ENCODE measurements at regions of chr9 and their contacts with region 1.

Region 1: DNA sequence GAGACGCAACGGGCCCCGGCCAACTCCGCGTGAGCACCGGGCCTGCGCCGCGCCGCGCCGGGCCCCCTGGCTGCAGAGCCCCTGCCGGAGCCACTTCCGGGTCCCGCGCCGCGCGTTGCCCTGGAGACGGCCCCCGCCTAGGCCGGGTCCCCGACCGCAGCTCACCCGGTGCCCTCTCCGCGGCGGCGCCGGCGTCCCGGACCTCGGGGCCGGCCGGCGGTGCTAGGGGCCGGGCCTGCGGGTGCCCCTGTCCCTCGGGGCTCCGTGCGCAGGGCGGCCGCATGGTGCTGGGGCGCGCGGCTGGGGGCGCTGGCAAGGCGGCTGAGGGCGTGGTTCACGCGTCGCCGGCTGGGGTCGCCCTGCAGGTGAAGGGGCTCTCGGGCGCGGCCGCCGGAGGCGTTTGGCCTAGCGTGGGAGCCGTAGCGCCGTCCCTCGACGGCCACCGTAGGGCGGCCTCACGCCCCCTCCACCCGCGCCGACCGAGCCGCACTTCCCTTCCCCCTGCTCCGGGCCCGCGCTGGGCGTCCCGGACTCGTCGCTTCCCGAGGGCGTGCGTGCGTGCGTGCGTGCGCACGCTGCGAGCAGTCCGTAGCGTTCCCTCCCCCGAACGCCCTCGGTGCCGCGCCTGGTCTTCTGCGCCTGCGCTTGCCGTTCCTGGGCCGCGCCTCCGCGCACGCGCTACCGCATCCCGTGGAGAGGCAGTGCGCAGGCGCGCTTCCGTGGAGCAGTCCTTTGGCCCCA is at the start of gene TMEM250:
- DNase-seq: peak; percentile 93 to 99 (median 96)
- ATAC-seq: peak; percentile 93
- H3K4me3 ChIP-seq: peak within 1 kb of the TSS; percentile 54
- H3K4me3 Mint-ChIP-seq: peak within 1 kb of the TSS; percentile 89
- H3K27ac ChIP-seq: peak within 1 kb of the TSS; percentile 76 to 79
- H3K27ac Mint-ChIP-seq: peak within 1 kb of the TSS; percentile 79
- H3K4me1 ChIP-seq: peaks cover 62% of the 10 kb centered on the region
- H3K4me1 Mint-ChIP-seq: peaks cover 22% of the 10 kb centered on the region
- H3K27me3 ChIP-seq: no peaks in the 10 kb centered on the region
- H3K27me3 Mint-ChIP-seq: no peaks in the 10 kb centered on the region
- CTCF ChIP-seq: no peak
- total RNA-seq, gene TMEM250: 6.5 to 7.9 TPM

Region 2: DNA sequence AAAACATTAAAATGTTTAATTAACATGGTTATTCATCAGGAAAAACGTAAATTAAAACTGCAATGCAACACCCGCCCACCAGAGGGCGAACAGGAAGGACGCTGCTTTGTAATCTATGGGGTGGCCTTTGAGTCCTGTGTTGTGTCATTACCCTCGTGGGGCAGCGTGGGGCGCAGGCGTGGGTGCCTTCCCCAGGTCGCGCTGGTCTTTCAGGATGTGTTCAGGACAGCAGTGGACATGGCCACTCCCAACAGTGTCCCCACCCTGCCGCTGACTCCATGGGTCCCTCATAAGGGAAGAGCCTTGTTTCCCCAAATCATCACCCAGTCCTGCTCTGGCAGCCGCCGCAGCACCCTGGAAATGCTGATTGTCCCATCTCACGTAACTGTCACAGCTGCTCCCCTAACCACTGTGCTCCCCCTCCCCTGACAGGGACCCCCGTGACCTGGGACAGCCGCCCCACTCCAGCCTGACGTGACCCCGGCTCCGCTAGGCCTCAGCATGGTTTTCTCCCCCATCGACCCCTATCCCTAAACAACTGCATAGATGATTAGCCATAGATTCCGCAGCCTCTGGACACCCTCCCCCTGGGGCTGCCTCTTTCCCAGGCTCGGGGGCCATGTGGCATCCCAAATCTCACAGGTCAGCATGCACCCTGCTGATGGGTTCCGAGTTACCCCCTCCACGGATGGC is 515.6 kb before region 1 on chr9:
- CTCF ChIA-PET with region 1: no interaction called
- POLR2A ChIA-PET with region 1: no interaction called
- intact Hi-C with region 1: loop called in 1 of 2 experiments (anchors 5 kb)
- DNase-seq: peak; percentile 22 to 70 (median 45)
- ATAC-seq: no peak
- H3K4me3 ChIP-seq: no peak overlapping the region
- H3K4me3 Mint-ChIP-seq: no peak overlapping the region
- H3K27ac ChIP-seq: no peak overlapping the region
- H3K27ac Mint-ChIP-seq: no peak overlapping the region
- H3K4me1 ChIP-seq: peaks cover 5% of the 10 kb centered on the region
- H3K4me1 Mint-ChIP-seq: no peaks in the 10 kb centered on the region
- H3K27me3 ChIP-seq: peaks cover 0 to 6% of the 10 kb centered on the region in 2 experiments
- H3K27me3 Mint-ChIP-seq: peaks cover 27% of the 10 kb centered on the region
- CTCF ChIP-seq: peak; percentile 77

Region 3: DNA sequence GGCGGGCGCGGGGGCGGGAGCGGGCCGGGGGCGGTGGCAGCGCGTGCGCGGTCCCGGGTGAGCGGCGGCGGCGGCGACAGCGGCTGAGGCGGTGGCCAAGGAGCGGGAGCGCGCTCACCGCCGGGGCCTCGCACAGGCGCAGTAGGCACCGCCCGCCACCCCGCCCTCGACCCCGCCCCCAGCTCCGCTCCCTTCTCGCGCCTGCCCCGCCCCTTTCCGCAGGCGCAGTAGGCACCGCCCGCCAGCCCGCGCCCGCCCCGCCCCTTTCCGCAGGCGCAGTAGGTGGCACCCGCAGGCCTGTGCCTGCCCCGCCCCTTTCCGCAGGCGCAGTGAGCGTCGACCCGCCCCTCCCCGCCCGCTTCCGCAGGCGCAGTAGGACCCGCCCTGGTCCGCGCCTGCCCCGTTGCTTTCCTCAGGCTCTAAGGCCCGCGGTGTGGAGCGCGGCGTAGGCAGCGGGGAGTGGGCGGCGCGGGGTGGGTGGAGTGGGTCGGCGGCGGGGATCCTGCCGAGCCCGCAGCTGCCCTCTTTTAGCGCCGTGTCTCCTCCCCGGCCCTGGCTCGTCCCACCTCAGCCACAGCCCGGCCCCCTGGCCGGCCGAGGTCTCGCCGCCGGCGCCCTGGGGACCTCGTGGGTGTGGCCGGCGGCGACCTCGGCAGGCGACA is 210.9 kb before region 1 on chr9 and contains the start of gene CAMSAP1:
- CTCF ChIA-PET with region 1: no interaction called
- POLR2A ChIA-PET with region 1: no interaction called
- intact Hi-C with region 1: loop called (anchors 2 kb)
- DNase-seq: peak; percentile 89 to 99 (median 96)
- ATAC-seq: peak; percentile 88
- H3K4me3 ChIP-seq: peak within 1 kb of the TSS; percentile 79
- H3K4me3 Mint-ChIP-seq: peak within 1 kb of the TSS; percentile 94
- H3K27ac ChIP-seq: peak within 1 kb of the TSS in 1 of 2 donors; percentile 61
- H3K27ac Mint-ChIP-seq: peak within 1 kb of the TSS; percentile 78
- H3K4me1 ChIP-seq: peaks cover 46% of the 10 kb centered on the region
- H3K4me1 Mint-ChIP-seq: peaks cover 57% of the 10 kb centered on the region
- H3K27me3 ChIP-seq: no peaks in the 10 kb centered on the region
- H3K27me3 Mint-ChIP-seq: no peaks in the 10 kb centered on the region
- CTCF ChIP-seq: no peak
- total RNA-seq, gene CAMSAP1: 16.8 to 18.2 TPM

Region 4: DNA sequence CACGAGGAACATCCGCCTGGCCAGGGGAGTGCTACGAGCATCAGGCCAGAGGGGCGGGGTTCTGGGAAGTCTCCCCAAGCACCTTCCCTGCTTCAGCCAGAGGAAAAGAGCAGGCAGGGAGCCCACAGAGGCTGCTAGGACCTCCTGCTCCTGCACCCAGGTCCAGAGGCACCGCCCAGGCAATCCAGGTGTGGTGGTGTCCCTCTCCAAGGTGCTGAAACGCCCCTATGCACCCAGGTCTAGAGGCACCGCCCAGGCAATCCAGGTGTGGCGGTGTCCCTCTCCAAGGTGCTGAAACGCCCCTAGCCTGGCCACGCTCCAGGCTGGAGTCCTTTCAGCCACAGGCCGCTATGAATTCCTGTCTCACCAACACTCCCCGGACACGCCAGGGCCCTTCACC is 146.6 kb before region 1 on chr9:
- CTCF ChIA-PET with region 1: interaction called, 15 read pairs
- POLR2A ChIA-PET with region 1: interaction called, 3 read pairs
- intact Hi-C with region 1: loop called (anchors 1 kb)
- DNase-seq: peak in 11 of 14 experiments; percentile 31 to 83 (median 42)
- ATAC-seq: peak; percentile 70
- H3K4me3 ChIP-seq: no peak overlapping the region
- H3K4me3 Mint-ChIP-seq: no peak overlapping the region
- H3K27ac ChIP-seq: no peak overlapping the region
- H3K27ac Mint-ChIP-seq: no peak overlapping the region
- H3K4me1 ChIP-seq: peaks cover 20% of the 10 kb centered on the region
- H3K4me1 Mint-ChIP-seq: peaks cover 8% of the 10 kb centered on the region
- H3K27me3 ChIP-seq: no peaks in the 10 kb centered on the region
- H3K27me3 Mint-ChIP-seq: peaks cover 4% of the 10 kb centered on the region
- CTCF ChIP-seq: no peak

Region 5: GRCh38 chr9:136949817-136950655 is 831.5 kb after region 1 on chr9:
- CTCF ChIA-PET with region 1: no interaction called
- POLR2A ChIA-PET with region 1: no interaction called
- intact Hi-C with region 1: loop called in 1 of 2 experiments (anchors 10 kb)
- DNase-seq: peak; percentile 93 to 97 (median 96)
- ATAC-seq: peak; percentile 97
- H3K4me3 ChIP-seq: peak overlapping the region; percentile 69
- H3K4me3 Mint-ChIP-seq: peak overlapping the region; percentile 83
- H3K27ac ChIP-seq: peak overlapping the region; percentile 56 to 75
- H3K27ac Mint-ChIP-seq: peak overlapping the region; percentile 86
- H3K4me1 ChIP-seq: peaks cover 38% of the 10 kb centered on the region
- H3K4me1 Mint-ChIP-seq: peaks cover 5% of the 10 kb centered on the region
- H3K27me3 ChIP-seq: no peaks in the 10 kb centered on the region
- H3K27me3 Mint-ChIP-seq: no peaks in the 10 kb centered on the region
- CTCF ChIP-seq: peak; percentile 42